Left ventricle myocardium inferior (tissue), 1 donor: ENCODE measurements at regions of chr14 and their contacts with region 1.

Region 1: GRCh38 chr14:99982537-99983250 is 82.5 kb upstream of the EVL start:
- DNase-seq: peak; percentile 28
- H3K4me3 ChIP-seq: no peak overlapping the region
- H3K27ac ChIP-seq: no peak overlapping the region
- H3K4me1 ChIP-seq: peaks cover 6% of the 10 kb centered on the region
- H3K27me3 ChIP-seq: no peaks in the 10 kb centered on the region
- CTCF ChIP-seq: peak; percentile 92

Region 2: DNA sequence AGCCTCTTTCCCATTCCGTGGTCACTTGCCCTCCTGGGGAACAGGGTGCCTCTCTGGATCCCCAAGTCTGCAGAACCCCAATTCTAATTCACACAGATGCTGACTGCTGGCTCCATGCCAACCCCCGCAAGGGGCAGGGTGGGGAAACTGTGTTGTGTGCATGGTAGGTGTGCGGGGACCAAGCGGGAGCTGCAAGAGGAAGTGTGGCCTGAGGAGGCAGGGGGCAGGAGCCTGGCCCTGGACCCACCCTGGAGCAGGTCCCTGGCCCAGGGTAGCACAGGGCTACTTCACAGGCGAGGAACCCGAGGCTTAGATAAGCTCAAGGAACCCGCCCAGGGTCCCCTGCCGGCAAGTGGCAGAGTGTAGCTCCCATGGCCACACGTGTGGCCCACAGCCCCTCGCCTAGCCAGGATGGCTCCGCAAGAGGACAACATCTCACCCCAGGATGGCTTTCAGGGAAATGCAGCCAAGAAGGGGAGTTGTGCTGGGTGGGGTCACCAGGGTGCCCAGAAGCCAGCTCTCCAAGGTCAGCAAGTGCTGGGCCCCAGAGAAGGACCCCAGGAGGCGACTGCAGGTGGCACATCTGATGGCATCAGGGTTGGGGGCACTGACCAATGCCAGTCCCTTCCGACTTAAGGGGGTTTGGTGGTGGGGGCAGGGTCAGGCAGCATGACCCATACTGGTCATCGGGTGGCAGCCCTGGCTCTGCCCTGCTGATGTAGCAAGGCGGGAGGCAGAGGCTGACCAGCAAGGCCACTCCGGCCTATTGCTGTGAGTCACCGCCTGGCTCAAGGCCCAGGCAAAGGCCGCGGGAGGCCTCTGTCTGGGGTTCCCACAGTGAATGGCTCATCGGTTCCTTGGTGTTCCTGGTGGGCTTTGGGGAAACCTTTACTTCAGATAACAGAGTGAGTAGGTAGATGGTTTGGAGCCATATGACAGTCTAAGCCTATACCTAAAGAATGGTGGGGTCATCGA is 226.8 kb before region 1 on chr14:
- intact Hi-C with region 1: no loop called
- DNase-seq: peak; percentile 82
- H3K4me3 ChIP-seq: no peak overlapping the region
- H3K27ac ChIP-seq: peak overlapping the region; percentile 29
- H3K4me1 ChIP-seq: peaks cover 78% of the 10 kb centered on the region
- H3K27me3 ChIP-seq: no peaks in the 10 kb centered on the region
- CTCF ChIP-seq: no peak

Region 3: DNA sequence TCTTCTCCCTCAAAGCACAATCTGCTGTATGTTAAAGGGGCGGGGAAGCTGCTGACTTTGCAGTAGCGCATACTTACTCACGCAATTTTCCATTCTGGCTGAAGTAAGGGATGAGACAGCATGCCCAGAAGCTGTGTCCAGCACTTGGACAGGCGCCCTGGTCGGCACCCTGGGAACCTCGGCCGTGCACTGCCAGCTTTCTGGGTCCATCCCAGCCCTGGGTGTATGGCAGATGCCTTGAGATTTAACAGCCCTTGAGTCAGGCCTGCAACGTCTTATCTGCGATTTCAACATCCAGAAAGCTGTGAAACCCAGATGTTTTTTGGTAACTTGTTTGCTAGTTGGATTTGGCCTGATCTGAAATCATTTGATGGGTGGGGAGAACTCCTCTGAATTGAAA is 173.3 kb before region 1 on chr14:
- intact Hi-C with region 1: no loop called
- DNase-seq: peak; percentile 74
- H3K4me3 ChIP-seq: no peak overlapping the region
- H3K27ac ChIP-seq: peak overlapping the region; percentile 71
- H3K4me1 ChIP-seq: peaks cover 42% of the 10 kb centered on the region
- H3K27me3 ChIP-seq: no peaks in the 10 kb centered on the region
- CTCF ChIP-seq: no peak

Region 4: GRCh38 chr14:100108042-100108825 is 125.5 kb after region 1 on chr14:
- intact Hi-C with region 1: loop called (anchors 5 kb)
- DNase-seq: peak; percentile 88
- H3K4me3 ChIP-seq: no peak overlapping the region
- H3K27ac ChIP-seq: peak overlapping the region; percentile 59
- H3K4me1 ChIP-seq: peaks cover 67% of the 10 kb centered on the region
- H3K27me3 ChIP-seq: no peaks in the 10 kb centered on the region
- CTCF ChIP-seq: peak; percentile 93

Region 5: GRCh38 chr14:100192672-100193416 is 210.2 kb after region 1 on chr14:
- intact Hi-C with region 1: loop called (anchors 5 kb)
- DNase-seq: peak; percentile 99
- H3K4me3 ChIP-seq: peak overlapping the region; percentile 70
- H3K27ac ChIP-seq: peak overlapping the region; percentile 96
- H3K4me1 ChIP-seq: peaks cover 19% of the 10 kb centered on the region
- H3K27me3 ChIP-seq: no peaks in the 10 kb centered on the region
- CTCF ChIP-seq: peak; percentile 89